ENCODE measurements at regions of chr11 and their contacts with region 1.

Region 1: GRCh38 chr11:1832211-1832919 is 2.4 kb upstream of the SYT8 start:
- DNase-seq: peak; percentile 71 to 82 (median 76)
- ATAC-seq: peak; percentile 24
- H3K4me3 ChIP-seq: no peak overlapping the region
- H3K4me1 ChIP-seq: peaks cover 50% of the 10 kb centered on the region
- CTCF ChIP-seq: peak; percentile 95

Region 2: DNA sequence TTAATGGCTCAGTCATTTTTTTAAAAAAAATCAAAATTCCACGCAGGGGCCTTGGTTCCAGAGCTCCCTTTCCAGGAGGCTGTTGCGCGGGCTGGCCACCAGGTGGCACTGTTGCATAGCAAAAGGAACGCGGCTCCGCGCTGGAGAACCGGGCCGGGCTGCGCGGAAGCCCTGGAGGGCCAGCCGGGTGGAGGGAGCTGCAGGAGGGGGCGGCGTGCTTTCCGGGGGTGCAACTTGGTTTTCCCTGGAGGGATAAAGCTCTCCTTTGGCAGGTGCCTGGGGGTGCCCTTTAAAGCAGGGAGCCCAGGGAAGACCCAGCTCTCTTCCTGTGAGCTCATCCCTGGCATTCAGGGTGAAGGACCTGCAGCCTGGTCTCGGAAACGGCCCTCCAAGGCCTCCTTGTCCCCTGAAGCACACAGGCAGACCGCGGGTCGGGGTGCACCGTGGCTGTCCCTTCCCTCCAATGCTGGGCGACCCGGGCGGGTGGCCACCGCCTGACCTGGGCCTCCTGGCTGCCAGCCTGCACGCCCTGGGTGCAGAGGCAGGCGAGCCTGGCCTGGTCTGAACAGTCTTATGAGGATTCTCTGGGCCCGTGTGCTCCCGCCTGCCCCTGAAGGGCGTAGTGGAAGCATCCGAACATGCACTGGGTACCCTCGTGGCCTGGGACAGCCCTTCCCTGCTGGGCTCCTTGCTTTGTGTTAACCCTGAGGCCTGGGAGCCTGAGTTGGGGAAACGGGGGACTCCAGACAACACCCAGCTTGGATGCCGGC is 179.4 kb before region 1 on chr11:
- intact Hi-C with region 1: loop called in 1 of 2 experiments (anchors 5 kb)
- DNase-seq: peak; percentile 77 to 78 (median 77)
- ATAC-seq: peak; percentile 92
- H3K4me3 ChIP-seq: no peak overlapping the region
- H3K4me1 ChIP-seq: no peaks in the 10 kb centered on the region
- CTCF ChIP-seq: peak; percentile 94

Region 3: GRCh38 chr11:1694064-1694845 is 138.1 kb before region 1 on chr11:
- intact Hi-C with region 1: loop called (anchors 2 to 5 kb)
- DNase-seq: peak; percentile 88 to 95 (median 93)
- ATAC-seq: peak; percentile 97
- H3K4me3 ChIP-seq: no peak overlapping the region
- H3K4me1 ChIP-seq: peaks cover 6% of the 10 kb centered on the region
- CTCF ChIP-seq: peak; percentile 94

Region 4: GRCh38 chr11:1763796-1764661 is 68.3 kb before region 1 on chr11 and contains the start of gene CTSD:
- intact Hi-C with region 1: loop called in 1 of 2 experiments (anchors 5 kb)
- DNase-seq: peak; percentile 93 to 95 (median 93)
- ATAC-seq: peak; percentile 86
- H3K4me3 ChIP-seq: peak within 1 kb of the TSS; percentile 97
- H3K4me1 ChIP-seq: peaks cover 38% of the 10 kb centered on the region
- CTCF ChIP-seq: no peak
- total RNA-seq, gene CTSD: 631 to 1,107 (median 1,007) TPM

Region 5: GRCh38 chr11:2287091-2287490 is 454.7 kb after region 1 on chr11:
- intact Hi-C with region 1: no loop called
- DNase-seq: peak; percentile 9 to 50 (median 31)
- ATAC-seq: no peak
- H3K4me3 ChIP-seq: no peak overlapping the region
- H3K4me1 ChIP-seq: no peaks in the 10 kb centered on the region
- CTCF ChIP-seq: no peak

Measured in mucosa of descending colon (tissue), 3 donors.